Right cardiac atrium (tissue), 5 donors: ENCODE measurements at regions of chr7 and their contacts with region 1.

Region 1: GRCh38 chr7:10655031-10655430 is 318.6 kb upstream of the PHF14 start:
- DNase-seq: no peak
- ATAC-seq: no peak
- H3K4me3 ChIP-seq: no peak overlapping the region
- H3K27ac ChIP-seq: no peak overlapping the region
- H3K4me1 ChIP-seq: no peaks in the 10 kb centered on the region
- H3K27me3 ChIP-seq: no peaks in the 10 kb centered on the region

Region 2: GRCh38 chr7:10442685-10443084 is 212.3 kb before region 1 on chr7:
- intact Hi-C with region 1: no loop called
- DNase-seq: no peak
- ATAC-seq: no peak
- H3K4me3 ChIP-seq: no peak overlapping the region
- H3K27ac ChIP-seq: no peak overlapping the region
- H3K4me1 ChIP-seq: no peaks in the 10 kb centered on the region
- H3K27me3 ChIP-seq: no peaks in the 10 kb centered on the region

Region 3: GRCh38 chr7:10612950-10613349 is 42.1 kb before region 1 on chr7:
- intact Hi-C with region 1: no loop called
- DNase-seq: no peak
- ATAC-seq: no peak
- H3K4me3 ChIP-seq: no peak overlapping the region
- H3K27ac ChIP-seq: no peak overlapping the region
- H3K4me1 ChIP-seq: no peaks in the 10 kb centered on the region
- H3K27me3 ChIP-seq: no peaks in the 10 kb centered on the region

Region 4: GRCh38 chr7:10718768-10719167 is 63.7 kb after region 1 on chr7:
- intact Hi-C with region 1: loop called in 1 of 4 experiments (anchors 10 kb)
- DNase-seq: no peak
- ATAC-seq: no peak
- H3K4me3 ChIP-seq: no peak overlapping the region
- H3K27ac ChIP-seq: no peak overlapping the region
- H3K4me1 ChIP-seq: no peaks in the 10 kb centered on the region
- H3K27me3 ChIP-seq: no peaks in the 10 kb centered on the region

Region 5: DNA sequence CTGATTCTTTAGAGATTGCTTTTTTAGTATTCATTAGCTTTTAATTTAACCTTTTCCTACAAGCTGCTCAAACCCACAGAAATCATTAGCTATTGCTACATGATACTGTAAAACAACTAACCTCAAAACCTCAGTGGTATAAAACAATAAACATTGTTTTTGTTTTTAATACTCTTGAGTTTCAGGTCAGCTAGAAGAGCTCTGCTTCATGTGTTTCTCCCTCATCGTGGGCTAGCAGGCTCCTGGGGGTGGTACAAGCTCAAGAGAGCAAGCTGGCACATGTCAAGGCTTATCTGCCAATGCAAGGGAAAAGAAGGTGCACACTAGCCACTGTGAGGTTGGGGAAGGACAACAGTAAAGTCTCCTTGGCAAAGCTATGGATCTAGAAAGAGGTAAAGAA is 85.8 kb after region 1 on chr7:
- intact Hi-C with region 1: no loop called
- DNase-seq: no peak
- ATAC-seq: no peak
- H3K4me3 ChIP-seq: no peak overlapping the region
- H3K27ac ChIP-seq: no peak overlapping the region
- H3K4me1 ChIP-seq: no peaks in the 10 kb centered on the region
- H3K27me3 ChIP-seq: no peaks in the 10 kb centered on the region